ENCODE measurements at regions of chr20 and their contacts with region 1.

Region 1: DNA sequence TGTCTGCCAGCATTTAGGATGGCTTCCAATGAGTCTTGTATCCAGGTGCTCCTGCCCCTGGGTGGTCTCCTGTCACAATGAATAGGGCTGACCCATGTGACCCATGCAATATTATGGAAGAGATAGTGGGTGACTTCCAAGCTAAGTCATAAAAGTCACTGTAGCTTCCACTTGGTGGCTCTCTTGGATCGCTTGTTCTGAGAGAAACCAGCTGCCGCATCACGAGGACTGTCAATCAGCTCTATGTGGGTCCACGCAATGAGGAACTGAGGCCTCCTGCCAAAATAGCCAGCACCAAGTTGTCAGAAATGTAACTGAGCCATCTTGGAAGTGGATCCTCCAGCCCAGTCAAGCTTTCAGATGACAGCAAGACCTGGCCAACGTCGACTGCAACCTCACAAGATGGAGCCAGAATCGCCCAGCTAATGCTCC is 14.9 kb upstream of the MATN4 start:
- DNase-seq: peak; percentile 58 to 83
- ATAC-seq: no peak
- H3K4me3 ChIP-seq: no peak overlapping the region
- H3K27ac ChIP-seq: no peak overlapping the region
- H3K4me1 ChIP-seq: no peaks in the 10 kb centered on the region
- H3K27me3 ChIP-seq: no peaks in the 10 kb centered on the region

Region 2: DNA sequence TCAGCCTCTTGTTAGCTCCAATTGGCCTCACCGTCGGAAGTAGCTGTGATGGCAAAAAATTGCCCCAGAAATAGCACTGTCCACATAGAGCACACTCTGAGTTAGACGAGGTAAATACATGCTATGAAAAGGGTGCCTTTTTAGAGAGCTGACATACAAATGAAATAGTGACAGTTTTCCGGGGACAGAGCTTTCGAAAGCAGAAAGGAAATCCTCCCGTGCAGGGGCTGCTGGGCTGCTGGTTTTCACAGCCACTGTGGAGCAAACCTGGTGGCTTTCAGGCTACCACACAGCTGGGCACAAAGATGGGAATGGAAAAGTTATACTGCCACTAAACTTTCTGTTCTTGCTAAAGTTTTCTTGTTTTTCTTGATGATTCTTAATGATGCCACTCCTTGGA is 76.9 kb before region 1 on chr20:
- intact Hi-C with region 1: no loop called
- DNase-seq: no peak
- ATAC-seq: no peak
- H3K4me3 ChIP-seq: no peak overlapping the region
- H3K27ac ChIP-seq: no peak overlapping the region
- H3K4me1 ChIP-seq: no peaks in the 10 kb centered on the region
- H3K27me3 ChIP-seq: no peaks in the 10 kb centered on the region

Region 3: DNA sequence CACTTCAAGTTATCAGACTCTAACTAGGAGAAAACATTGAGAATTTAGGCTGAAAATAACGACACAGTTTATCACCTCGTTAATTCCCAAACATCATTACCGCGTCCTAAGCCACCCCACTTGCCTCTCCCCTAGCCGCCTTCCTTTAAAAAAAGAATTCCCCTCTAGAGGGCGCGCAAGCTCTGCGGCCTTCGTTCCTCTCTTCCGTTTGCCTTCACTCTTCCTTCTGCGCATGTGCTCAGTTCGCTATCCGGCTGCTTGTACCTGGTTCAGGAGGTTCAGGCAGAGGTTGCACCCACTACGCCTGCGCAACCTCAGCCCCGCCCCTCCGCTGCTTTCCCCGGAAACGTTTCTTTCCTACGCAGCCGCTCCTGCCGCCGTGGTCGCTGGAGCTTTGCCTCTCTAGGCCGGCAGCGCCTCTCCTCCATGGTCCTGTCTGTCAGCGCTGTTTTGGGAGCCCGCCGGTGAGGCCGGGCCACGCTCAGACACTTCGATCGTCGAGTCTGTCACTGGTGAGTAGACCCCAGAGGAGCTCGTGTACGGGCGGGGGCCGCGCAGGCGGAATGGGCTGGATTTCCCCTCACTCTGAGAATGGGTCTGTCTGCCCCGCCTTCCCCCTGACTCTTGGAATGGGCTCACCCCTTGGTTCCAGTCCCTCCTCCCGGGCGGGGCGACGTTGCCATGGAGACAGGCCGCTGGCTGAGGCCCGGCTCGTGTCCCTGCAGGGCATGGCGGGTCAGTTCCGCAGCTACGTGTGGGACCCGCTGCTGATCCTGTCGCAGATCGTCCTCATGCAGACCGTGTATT is 40.0 kb after region 1 on chr20 and contains the start of gene SYS1:
- intact Hi-C with region 1: loop called (anchors 5 kb)
- DNase-seq: peak; percentile 99 to 100
- ATAC-seq: peak; percentile 97
- H3K4me3 ChIP-seq: peak within 1 kb of the TSS; percentile 59 to 88
- H3K27ac ChIP-seq: peak within 1 kb of the TSS; percentile 73 to 87
- H3K4me1 ChIP-seq: peaks cover 0 to 2% of the 10 kb centered on the region in 2 donors
- H3K27me3 ChIP-seq: no peaks in the 10 kb centered on the region
- total RNA-seq, gene SYS1: 20.3 to 25.0 TPM

Region 4: DNA sequence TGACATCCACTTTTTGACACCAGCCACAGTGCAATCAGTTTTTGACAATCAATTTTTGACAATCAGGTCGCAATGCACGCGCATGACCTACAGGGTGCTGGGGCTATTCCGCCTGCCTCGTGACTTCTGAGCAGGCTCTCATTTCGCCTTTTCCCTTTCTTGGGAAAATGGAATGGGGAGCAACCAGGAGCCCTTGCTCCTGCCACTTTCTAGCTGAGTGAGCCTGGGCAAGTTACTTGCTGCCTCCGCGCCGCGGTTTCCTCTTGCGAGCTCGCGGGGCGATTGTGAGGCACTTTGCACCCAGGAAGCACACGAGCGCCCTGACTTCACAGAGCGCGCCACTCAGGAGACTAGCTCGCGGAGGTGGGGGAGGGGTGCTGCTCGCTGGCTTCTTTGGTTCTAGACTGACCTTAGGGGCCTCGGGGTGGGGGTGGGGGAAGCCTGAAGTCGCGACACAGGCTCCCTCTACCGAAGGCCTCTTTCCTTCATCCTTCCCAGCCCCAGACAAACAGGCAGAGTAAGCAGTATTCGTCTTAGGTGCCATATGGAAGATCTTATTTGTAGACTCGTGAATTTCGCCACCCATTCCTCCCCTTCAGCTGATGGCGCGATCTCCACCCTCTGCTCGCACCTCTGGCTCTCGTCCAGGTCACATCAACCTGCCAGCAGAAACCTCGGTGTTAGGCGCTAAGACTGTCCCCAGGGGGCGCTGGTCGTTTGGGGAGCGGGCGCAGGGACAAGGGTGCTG is 50.6 kb after region 1 on chr20:
- intact Hi-C with region 1: loop called (anchors 5 kb)
- DNase-seq: peak; percentile 95 to 98
- ATAC-seq: peak; percentile 92
- H3K4me3 ChIP-seq: peak overlapping the region; percentile 37 to 46
- H3K27ac ChIP-seq: peak overlapping the region; percentile 44 to 92
- H3K4me1 ChIP-seq: no peaks in the 10 kb centered on the region
- H3K27me3 ChIP-seq: no peaks in the 10 kb centered on the region

Region 5: GRCh38 chr20:45436732-45437391 is 113.9 kb after region 1 on chr20:
- intact Hi-C with region 1: loop called (anchors 1 to 2 kb)
- DNase-seq: peak; percentile 93 to 97
- ATAC-seq: peak; percentile 97
- H3K4me3 ChIP-seq: peak overlapping the region; percentile 46 to 55
- H3K27ac ChIP-seq: peak overlapping the region in 1 of 2 donors; percentile 64
- H3K4me1 ChIP-seq: no peaks in the 10 kb centered on the region
- H3K27me3 ChIP-seq: no peaks in the 10 kb centered on the region

Region 6: GRCh38 chr20:45450097-45450818 is 127.3 kb after region 1 on chr20:
- intact Hi-C with region 1: loop called in 1 of 2 experiments (anchors 5 kb)
- DNase-seq: no peak
- ATAC-seq: no peak
- H3K4me3 ChIP-seq: no peak overlapping the region
- H3K27ac ChIP-seq: no peak overlapping the region
- H3K4me1 ChIP-seq: no peaks in the 10 kb centered on the region
- H3K27me3 ChIP-seq: no peaks in the 10 kb centered on the region

Region 7: GRCh38 chr20:45771182-45771759 is 448.3 kb after region 1 on chr20:
- intact Hi-C with region 1: loop called (anchors 1 to 2 kb)
- DNase-seq: peak; percentile 80 to 90
- ATAC-seq: peak; percentile 91
- H3K4me3 ChIP-seq: no peak overlapping the region
- H3K27ac ChIP-seq: no peak overlapping the region
- H3K4me1 ChIP-seq: no peaks in the 10 kb centered on the region
- H3K27me3 ChIP-seq: no peaks in the 10 kb centered on the region

Measured in aorta (tissue), 5 donors.